ENCODE measurements at regions of chr14 and their contacts with region 1.

Region 1: GRCh38 chr14:35146711-35147149 is 24.4 kb downstream of the PRORP start:
- DNase-seq: no peak
- ATAC-seq: no peak
- H3K4me3 ChIP-seq: no peak overlapping the region
- H3K27ac ChIP-seq: no peak overlapping the region
- H3K4me1 ChIP-seq: peaks cover 10% of the 10 kb centered on the region
- H3K27me3 ChIP-seq: no peaks in the 10 kb centered on the region
- CTCF ChIP-seq: no peak
- EP300 ChIP-seq: no peak
- POLR2A ChIP-seq: no peak
- RAD21 ChIP-seq: no peak

Region 2: DNA sequence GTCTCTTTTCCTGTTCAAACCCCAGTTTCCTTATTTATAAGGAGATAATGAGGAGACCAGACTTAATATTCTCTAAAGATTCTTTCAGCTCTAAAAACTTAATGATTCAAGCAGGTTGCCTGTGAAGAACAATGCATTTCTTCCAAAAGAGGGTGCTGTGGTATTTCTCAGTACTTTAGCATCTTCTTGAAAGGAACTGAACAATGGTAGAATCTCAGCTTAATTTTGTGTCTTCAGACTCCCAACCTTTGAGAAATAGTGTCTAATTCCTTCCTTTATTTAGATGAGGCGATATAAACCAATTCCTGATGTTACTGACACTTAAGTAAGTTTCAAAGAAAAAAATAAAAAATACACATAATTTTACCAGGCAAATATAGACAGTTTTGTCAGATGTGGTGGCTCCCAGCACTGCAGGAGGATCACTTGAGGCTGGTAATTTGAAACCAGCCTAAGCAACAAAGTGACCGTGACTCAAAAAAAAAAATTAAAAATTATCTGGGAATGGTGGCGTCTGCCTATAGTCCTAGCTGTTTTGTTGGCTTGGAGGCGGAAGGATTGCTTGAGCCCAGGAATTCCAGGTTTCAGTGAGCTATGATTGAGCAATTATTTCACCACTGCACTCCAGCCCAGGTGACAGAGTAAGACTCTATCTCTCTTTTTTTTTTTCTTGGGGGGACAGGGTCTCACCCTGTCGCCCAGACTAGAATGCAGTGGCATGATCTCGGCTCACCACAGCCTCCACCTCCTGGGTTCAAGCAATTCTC is 68.6 kb after region 1 on chr14:
- CTCF ChIA-PET with region 1: interaction called, 21 read pairs
- POLR2A ChIA-PET with region 1: interaction called, 4 read pairs
- RAD21 ChIA-PET with region 1: interaction called, 8 read pairs
- SMC1A ChIA-PET with region 1: interaction called, 10 read pairs
- in situ Hi-C with region 1: no loop called
- intact Hi-C with region 1: no loop called
- DNase-seq: no peak
- ATAC-seq: peak; percentile 63
- H3K4me3 ChIP-seq: no peak overlapping the region
- H3K27ac ChIP-seq: no peak overlapping the region
- H3K4me1 ChIP-seq: no peaks in the 10 kb centered on the region
- H3K27me3 ChIP-seq: no peaks in the 10 kb centered on the region
- CTCF ChIP-seq: peak; percentile 24 to 61 (median 31); a peak in 5 of 6 replicates
- EP300 ChIP-seq: no peak
- POLR2A ChIP-seq: no peak
- RAD21 ChIP-seq: peak; percentile 69

Measured in GM12878 (cell line).